MCF 10A (cell line): ENCODE measurements at regions of chr15 and their contacts with region 1.

Region 1: GRCh38 chr15:72599855-72600464 is 54.5 kb upstream of the GOLGA6B start:
- DNase-seq: peak; percentile 64
- H3K4me3 Mint-ChIP-seq: no peak overlapping the region
- H3K27ac Mint-ChIP-seq: no peak overlapping the region
- H3K4me1 Mint-ChIP-seq: peaks cover 6% of the 10 kb centered on the region
- H3K27me3 Mint-ChIP-seq: no peaks in the 10 kb centered on the region
- CTCF ChIP-seq: peak; percentile 61

Region 2: DNA sequence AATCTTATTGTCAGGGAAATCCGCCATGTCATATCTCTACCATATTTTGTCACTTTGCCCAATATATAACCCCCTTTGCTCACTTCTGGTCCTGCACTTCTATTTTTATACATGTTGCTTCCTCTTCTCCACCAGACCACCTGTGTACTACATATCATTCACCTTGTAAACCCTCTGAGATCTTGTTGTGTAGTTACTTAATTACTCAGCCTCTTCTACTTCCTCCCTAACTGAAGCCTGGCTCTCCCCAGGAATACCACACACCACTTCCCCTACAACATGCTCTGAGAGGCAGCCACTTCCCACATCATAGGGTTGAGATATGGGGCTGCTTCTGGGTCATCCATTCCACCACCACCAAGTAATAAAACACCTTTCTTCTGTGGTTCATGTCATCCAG is 234.1 kb before region 1 on chr15:
- CTCF ChIA-PET with region 1: no interaction called
- POLR2A ChIA-PET with region 1: no interaction called
- intact Hi-C with region 1: no loop called
- DNase-seq: no peak
- H3K4me3 Mint-ChIP-seq: no peak overlapping the region
- H3K27ac Mint-ChIP-seq: peak overlapping the region; percentile 43
- H3K4me1 Mint-ChIP-seq: peaks cover 5% of the 10 kb centered on the region
- H3K27me3 Mint-ChIP-seq: no peaks in the 10 kb centered on the region
- CTCF ChIP-seq: no peak

Region 3: GRCh38 chr15:72585476-72586082 is 14.4 kb before region 1 on chr15:
- CTCF ChIA-PET with region 1: interaction called, 28 read pairs
- POLR2A ChIA-PET with region 1: interaction called, 4 read pairs
- intact Hi-C with region 1: no loop called
- DNase-seq: peak; percentile 22
- H3K4me3 Mint-ChIP-seq: no peak overlapping the region
- H3K27ac Mint-ChIP-seq: no peak overlapping the region
- H3K4me1 Mint-ChIP-seq: no peaks in the 10 kb centered on the region
- H3K27me3 Mint-ChIP-seq: no peaks in the 10 kb centered on the region
- CTCF ChIP-seq: no peak

Region 4: DNA sequence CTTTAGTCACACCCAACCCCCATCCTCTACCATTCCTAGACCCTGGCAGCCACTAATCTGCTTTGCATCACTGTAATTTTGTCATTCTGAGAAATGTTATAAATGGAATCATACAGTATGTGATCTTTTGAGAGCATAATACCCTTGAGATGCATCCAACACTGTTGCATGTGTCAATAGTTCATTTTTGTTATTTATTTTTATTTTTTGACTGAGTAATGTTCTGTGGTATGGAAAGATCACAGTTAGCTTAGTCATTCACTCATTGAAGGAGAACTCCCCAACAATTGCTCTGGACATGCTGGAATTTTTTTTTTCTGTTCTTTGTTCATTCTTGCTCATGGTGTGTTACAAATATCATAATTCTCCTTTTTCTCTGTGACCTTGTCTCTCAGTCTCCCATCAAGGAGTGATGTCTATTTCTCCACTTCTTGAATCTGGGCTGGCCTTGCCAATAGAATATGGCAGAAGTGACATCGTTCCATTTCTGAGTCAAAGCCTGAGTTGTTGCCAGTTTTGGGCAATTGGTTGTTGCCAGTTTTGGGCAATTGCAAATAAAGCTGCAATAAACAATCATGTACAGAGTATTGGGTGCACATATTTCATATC is 190.4 kb after region 1 on chr15:
- CTCF ChIA-PET with region 1: no interaction called
- POLR2A ChIA-PET with region 1: no interaction called
- intact Hi-C with region 1: no loop called
- DNase-seq: no peak
- H3K4me3 Mint-ChIP-seq: no peak overlapping the region
- H3K27ac Mint-ChIP-seq: no peak overlapping the region
- H3K4me1 Mint-ChIP-seq: no peaks in the 10 kb centered on the region
- H3K27me3 Mint-ChIP-seq: peaks cover 27% of the 10 kb centered on the region
- CTCF ChIP-seq: no peak

Region 5: GRCh38 chr15:72800833-72801480 is 201.0 kb after region 1 on chr15:
- CTCF ChIA-PET with region 1: no interaction called
- POLR2A ChIA-PET with region 1: no interaction called
- intact Hi-C with region 1: no loop called
- DNase-seq: no peak
- H3K4me3 Mint-ChIP-seq: no peak overlapping the region
- H3K27ac Mint-ChIP-seq: no peak overlapping the region
- H3K4me1 Mint-ChIP-seq: no peaks in the 10 kb centered on the region
- H3K27me3 Mint-ChIP-seq: no peaks in the 10 kb centered on the region
- CTCF ChIP-seq: no peak

Region 6: GRCh38 chr15:72859017-72859756 is 259.2 kb after region 1 on chr15:
- CTCF ChIA-PET with region 1: no interaction called
- POLR2A ChIA-PET with region 1: no interaction called
- intact Hi-C with region 1: no loop called
- DNase-seq: no peak
- H3K4me3 Mint-ChIP-seq: no peak overlapping the region
- H3K27ac Mint-ChIP-seq: no peak overlapping the region
- H3K4me1 Mint-ChIP-seq: no peaks in the 10 kb centered on the region
- H3K27me3 Mint-ChIP-seq: peaks cover 17% of the 10 kb centered on the region
- CTCF ChIP-seq: no peak